ENCODE measurements at regions of chr6 and their contacts with region 1.

Region 1: DNA sequence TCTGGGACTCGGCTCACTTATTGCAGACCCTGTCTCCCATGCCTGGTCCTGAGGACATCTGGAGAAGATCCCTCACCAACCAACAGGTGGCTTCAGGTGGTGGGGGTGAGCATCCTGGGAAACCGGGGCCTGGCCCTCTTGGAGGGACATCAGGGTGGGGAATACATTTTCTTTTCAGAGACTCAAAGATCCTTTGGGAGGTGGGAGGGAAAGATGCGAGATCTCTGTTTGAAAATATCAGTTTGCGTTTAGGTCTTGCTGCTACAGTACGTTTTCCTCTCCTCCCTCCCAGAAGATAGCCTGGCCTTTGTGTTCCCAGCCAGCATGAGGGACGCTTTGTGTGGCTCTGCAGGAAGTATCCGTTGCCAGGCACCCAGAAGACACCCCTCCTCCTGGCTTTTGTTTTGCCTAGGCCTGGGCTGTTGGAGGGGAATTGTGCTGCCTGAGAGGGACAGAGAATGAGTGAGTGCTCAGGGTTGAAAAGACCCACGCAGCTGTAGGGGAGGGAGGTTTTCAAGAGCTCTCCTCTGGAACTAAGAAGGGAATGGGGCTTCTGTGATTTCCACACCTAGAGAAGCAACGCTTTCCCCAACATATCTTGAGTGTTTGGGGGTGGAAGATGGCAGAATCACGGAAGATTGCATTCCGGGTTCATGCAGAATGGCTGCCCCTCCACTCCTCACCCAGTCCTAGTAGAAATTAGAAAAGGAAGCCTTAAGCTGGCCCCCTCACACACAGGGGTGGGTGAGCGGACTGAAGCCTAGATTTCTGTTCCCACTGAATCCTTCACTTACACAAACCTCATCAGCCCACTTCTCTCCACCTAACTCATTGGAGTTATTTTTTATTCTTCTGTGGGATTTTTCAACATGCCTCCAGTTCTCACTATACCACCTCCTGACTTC is 22.0 kb upstream of the SLC2A12 start:
- DNase-seq: no peak
- H3K4me3 ChIP-seq: no peak overlapping the region
- H3K27ac ChIP-seq: no peak overlapping the region
- H3K4me1 ChIP-seq: no peaks in the 10 kb centered on the region
- H3K27me3 ChIP-seq: no peaks in the 10 kb centered on the region
- CTCF ChIP-seq: no peak
- POLR2A ChIP-seq: no peak

Region 2: GRCh38 chr6:132675749-132676148 is 1398.7 kb before region 1 on chr6:
- intact Hi-C with region 1: loop called (anchors 5 kb)
- DNase-seq: no peak
- H3K4me3 ChIP-seq: no peak overlapping the region
- H3K27ac ChIP-seq: no peak overlapping the region
- H3K4me1 ChIP-seq: no peaks in the 10 kb centered on the region
- H3K27me3 ChIP-seq: no peaks in the 10 kb centered on the region
- CTCF ChIP-seq: no peak
- POLR2A ChIP-seq: no peak

Region 3: DNA sequence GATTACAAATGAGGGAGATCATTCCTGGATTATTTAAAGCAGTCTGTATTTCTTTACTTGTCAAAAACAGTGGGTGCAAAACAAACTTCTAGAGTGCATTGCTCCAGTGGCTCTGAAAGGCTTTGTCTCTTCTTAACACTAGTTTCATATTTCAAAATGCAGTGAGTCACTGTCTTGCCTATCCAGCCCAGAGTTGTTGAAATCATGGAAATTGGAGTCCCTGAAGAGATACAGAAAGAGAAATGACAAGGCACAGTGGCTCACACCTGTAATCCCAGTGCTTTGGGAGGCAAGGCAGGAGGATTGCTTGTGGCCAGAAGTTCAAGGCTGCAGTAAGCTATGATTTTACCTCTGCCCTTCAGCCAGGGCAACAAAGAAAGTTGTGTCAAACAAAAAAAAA is 33.3 kb before region 1 on chr6:
- intact Hi-C with region 1: no loop called
- DNase-seq: no peak
- H3K4me3 ChIP-seq: no peak overlapping the region
- H3K27ac ChIP-seq: no peak overlapping the region
- H3K4me1 ChIP-seq: no peaks in the 10 kb centered on the region
- H3K27me3 ChIP-seq: no peaks in the 10 kb centered on the region
- CTCF ChIP-seq: no peak
- POLR2A ChIP-seq: no peak